ENCODE measurements at regions of chr1 and their contacts with region 1.

Region 1: GRCh38 chr1:59699227-59699847 is 115.4 kb upstream of the HOOK1 start:
- DNase-seq: peak; percentile 67
- ATAC-seq: peak; percentile 44
- H3K4me3 ChIP-seq: no peak overlapping the region
- H3K4me3 Mint-ChIP-seq: no peak overlapping the region
- H3K27ac ChIP-seq: no peak overlapping the region
- H3K27ac Mint-ChIP-seq: no peak overlapping the region
- H3K4me1 ChIP-seq: peaks cover 24 to 29% of the 10 kb centered on the region in 2 donors
- H3K4me1 Mint-ChIP-seq: peaks cover 26% of the 10 kb centered on the region
- H3K27me3 ChIP-seq: no peaks in the 10 kb centered on the region
- H3K27me3 Mint-ChIP-seq: no peaks in the 10 kb centered on the region
- CTCF ChIP-seq: peak; percentile 97

Region 2: GRCh38 chr1:58652651-58653184 is 1046.6 kb before region 1 on chr1:
- CTCF ChIA-PET with region 1: interaction called, 11 read pairs
- POLR2A ChIA-PET with region 1: no interaction called
- intact Hi-C with region 1: no loop called
- DNase-seq: peak; percentile 75
- ATAC-seq: peak; percentile 81
- H3K4me3 ChIP-seq: no peak overlapping the region
- H3K4me3 Mint-ChIP-seq: no peak overlapping the region
- H3K27ac ChIP-seq: no peak overlapping the region
- H3K27ac Mint-ChIP-seq: no peak overlapping the region
- H3K4me1 ChIP-seq: no peaks in the 10 kb centered on the region
- H3K4me1 Mint-ChIP-seq: peaks cover 4% of the 10 kb centered on the region
- H3K27me3 ChIP-seq: no peaks in the 10 kb centered on the region
- H3K27me3 Mint-ChIP-seq: no peaks in the 10 kb centered on the region
- CTCF ChIP-seq: peak; percentile 90

Region 3: GRCh38 chr1:58783993-58784757 is 915.2 kb before region 1 on chr1 and contains the start of gene JUN:
- CTCF ChIA-PET with region 1: interaction called, 69 read pairs
- POLR2A ChIA-PET with region 1: interaction called, 5 read pairs
- intact Hi-C with region 1: loop called (anchors 1 kb)
- DNase-seq: peak; percentile 100
- ATAC-seq: peak; percentile 71
- H3K4me3 ChIP-seq: peak within 1 kb of the TSS; percentile 65 to 99 (median 98)
- H3K4me3 Mint-ChIP-seq: peak within 1 kb of the TSS; percentile 90
- H3K27ac ChIP-seq: peak within 1 kb of the TSS; percentile 100
- H3K27ac Mint-ChIP-seq: peak within 1 kb of the TSS; percentile 97
- H3K4me1 ChIP-seq: peaks cover 16 to 27% of the 10 kb centered on the region in 2 donors
- H3K4me1 Mint-ChIP-seq: peaks cover 39% of the 10 kb centered on the region
- H3K27me3 ChIP-seq: no peaks in the 10 kb centered on the region
- H3K27me3 Mint-ChIP-seq: no peaks in the 10 kb centered on the region
- CTCF ChIP-seq: no peak
- total RNA-seq, gene JUN: 94.4 and 95.3 TPM in 2 replicates

Region 4: DNA sequence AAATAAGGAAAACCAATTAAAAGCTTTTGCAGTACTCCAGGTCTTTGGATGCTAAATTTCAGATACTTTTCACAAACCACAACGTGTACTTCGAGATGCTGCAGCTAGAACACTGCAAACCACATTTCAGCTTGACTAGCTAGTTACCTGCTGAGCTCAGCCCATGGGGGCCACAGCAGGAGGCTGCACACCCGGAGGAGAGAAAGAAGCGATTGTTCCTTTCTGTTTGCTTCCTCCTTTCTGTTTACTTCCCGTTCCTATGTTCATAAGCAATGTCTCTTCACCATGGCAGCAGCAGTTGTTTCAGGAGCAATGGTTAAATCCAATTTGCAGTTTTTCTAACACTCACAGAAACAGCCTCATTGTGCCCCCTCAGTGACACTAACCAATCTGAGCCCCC is 628.0 kb before region 1 on chr1:
- CTCF ChIA-PET with region 1: interaction called, 11 read pairs
- POLR2A ChIA-PET with region 1: no interaction called
- intact Hi-C with region 1: loop called (anchors 10 kb)
- DNase-seq: peak; percentile 40
- ATAC-seq: peak; percentile 28
- H3K4me3 ChIP-seq: no peak overlapping the region
- H3K4me3 Mint-ChIP-seq: peak overlapping the region; percentile 67
- H3K27ac ChIP-seq: peak overlapping the region; percentile 22 to 31
- H3K27ac Mint-ChIP-seq: peak overlapping the region; percentile 88
- H3K4me1 ChIP-seq: peaks cover 22 to 23% of the 10 kb centered on the region in 2 donors
- H3K4me1 Mint-ChIP-seq: peaks cover 27% of the 10 kb centered on the region
- H3K27me3 ChIP-seq: no peaks in the 10 kb centered on the region
- H3K27me3 Mint-ChIP-seq: no peaks in the 10 kb centered on the region
- CTCF ChIP-seq: no peak

Region 5: DNA sequence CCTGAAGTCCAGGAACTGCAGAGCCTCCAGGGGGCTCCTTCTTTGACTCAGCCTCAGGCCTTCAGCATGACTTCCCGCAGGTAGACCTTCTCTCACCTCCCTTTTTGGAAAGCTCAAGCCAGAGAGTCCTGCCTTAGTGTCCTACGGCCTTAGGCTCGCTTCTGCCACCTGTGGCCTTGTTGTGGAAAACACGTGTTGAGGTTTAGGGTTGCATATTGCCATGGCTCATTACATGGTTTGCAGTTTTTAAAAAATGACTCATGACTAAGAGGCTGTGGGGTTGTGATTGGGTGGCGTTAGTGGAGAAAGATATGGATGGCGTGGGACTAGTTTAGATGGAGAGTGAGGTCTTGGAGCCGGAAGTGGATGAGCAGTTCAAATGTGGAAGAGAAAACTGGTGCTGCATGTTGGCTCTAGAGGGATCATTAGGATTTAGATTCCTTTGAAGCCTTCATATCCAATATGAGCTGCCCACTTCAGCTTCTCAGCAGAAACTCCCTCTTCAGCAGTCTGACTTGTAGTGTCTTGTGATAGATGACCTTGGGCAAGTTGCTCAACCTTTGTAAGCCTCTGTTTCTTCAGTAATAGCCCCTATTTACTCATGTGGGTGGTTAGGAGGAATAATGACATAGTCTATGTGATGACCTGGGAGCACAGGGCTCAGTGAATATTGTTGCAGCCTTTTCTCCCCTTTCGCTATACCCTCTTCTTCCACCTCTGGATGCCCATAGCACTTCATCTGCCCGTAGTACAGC is 409.0 kb before region 1 on chr1:
- CTCF ChIA-PET with region 1: interaction called, 21 read pairs
- POLR2A ChIA-PET with region 1: no interaction called
- intact Hi-C with region 1: no loop called
- DNase-seq: peak; percentile 47
- ATAC-seq: peak; percentile 58
- H3K4me3 ChIP-seq: no peak overlapping the region
- H3K4me3 Mint-ChIP-seq: no peak overlapping the region
- H3K27ac ChIP-seq: no peak overlapping the region
- H3K27ac Mint-ChIP-seq: no peak overlapping the region
- H3K4me1 ChIP-seq: peaks cover 16 to 22% of the 10 kb centered on the region in 2 donors
- H3K4me1 Mint-ChIP-seq: peaks cover 32% of the 10 kb centered on the region
- H3K27me3 ChIP-seq: no peaks in the 10 kb centered on the region
- H3K27me3 Mint-ChIP-seq: no peaks in the 10 kb centered on the region
- CTCF ChIP-seq: peak; percentile 46

Region 6: GRCh38 chr1:59759156-59759925 is 60.0 kb after region 1 on chr1:
- CTCF ChIA-PET with region 1: interaction called, 60 read pairs
- POLR2A ChIA-PET with region 1: no interaction called
- intact Hi-C with region 1: loop called (anchors 1 kb)
- DNase-seq: peak; percentile 77
- ATAC-seq: peak; percentile 87
- H3K4me3 ChIP-seq: no peak overlapping the region
- H3K4me3 Mint-ChIP-seq: peak overlapping the region; percentile 40
- H3K27ac ChIP-seq: no peak overlapping the region
- H3K27ac Mint-ChIP-seq: no peak overlapping the region
- H3K4me1 ChIP-seq: peaks cover 0 to 7% of the 10 kb centered on the region in 2 donors
- H3K4me1 Mint-ChIP-seq: peaks cover 9% of the 10 kb centered on the region
- H3K27me3 ChIP-seq: no peaks in the 10 kb centered on the region
- H3K27me3 Mint-ChIP-seq: no peaks in the 10 kb centered on the region
- CTCF ChIP-seq: peak; percentile 94

Measured in B cell (primary cell).